Activated CD8-positive, alpha-beta T cell treated with anti-CD3 and anti-CD28 coated beads, Interleukin-2, amount 10 ng/mL, durations not matched to agents 7 days and 5 days (primary cell): ENCODE measurements at regions of chr6 and their contacts with region 1.

Region 1: DNA sequence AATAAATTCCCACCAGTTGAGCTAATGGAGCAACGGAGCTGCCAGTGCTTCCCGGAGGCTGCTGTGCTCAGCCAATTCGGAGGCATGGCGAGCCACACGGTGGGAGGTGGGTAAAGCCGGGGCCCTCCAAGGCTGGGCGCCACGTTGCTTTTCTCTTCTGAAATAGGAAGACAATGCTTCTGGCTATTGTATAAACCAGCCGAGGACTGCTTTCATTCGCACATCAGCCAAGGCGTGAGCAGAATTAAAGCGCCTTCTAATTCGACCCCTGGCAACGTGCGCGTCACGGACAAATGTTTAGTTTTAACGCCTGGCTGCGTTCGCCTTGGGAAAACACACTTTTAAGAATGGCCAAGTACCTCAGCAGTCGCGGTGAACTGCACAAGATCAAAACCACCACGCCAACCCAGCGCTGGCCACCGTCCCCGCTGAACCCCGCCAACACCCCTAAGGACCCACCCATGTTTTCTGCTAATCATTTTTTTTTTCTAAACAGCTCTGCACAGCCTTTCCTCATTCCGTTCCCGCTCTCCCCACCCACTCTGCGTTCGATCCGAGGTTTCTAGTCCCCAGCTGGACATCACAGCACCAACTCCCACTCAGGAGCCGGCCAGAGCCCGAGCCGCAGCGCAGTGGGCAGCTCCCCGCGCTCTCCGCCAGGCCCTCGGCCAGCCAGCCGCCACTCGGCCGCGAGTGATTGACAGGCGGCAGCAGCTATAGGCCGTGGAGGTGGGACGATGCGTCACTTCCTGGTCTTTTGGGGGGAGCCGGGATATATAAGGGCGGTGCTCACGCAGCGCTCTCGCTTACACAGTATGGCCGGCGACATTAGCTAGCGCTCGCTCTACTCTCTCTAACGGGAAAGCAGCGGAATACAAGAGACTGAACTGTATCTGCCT is at the start of gene AMD1:
- DNase-seq: peak; percentile 97
- ATAC-seq: peak; percentile 74
- H3K4me3 Mint-ChIP-seq: peak within 1 kb of the TSS; percentile 95
- H3K27ac Mint-ChIP-seq: peak within 1 kb of the TSS; percentile 98
- H3K4me1 Mint-ChIP-seq: peaks cover 25% of the 10 kb centered on the region
- H3K27me3 Mint-ChIP-seq: no peaks in the 10 kb centered on the region
- total RNA-seq, gene AMD1: 75.5 to 77.7 TPM

Region 2: DNA sequence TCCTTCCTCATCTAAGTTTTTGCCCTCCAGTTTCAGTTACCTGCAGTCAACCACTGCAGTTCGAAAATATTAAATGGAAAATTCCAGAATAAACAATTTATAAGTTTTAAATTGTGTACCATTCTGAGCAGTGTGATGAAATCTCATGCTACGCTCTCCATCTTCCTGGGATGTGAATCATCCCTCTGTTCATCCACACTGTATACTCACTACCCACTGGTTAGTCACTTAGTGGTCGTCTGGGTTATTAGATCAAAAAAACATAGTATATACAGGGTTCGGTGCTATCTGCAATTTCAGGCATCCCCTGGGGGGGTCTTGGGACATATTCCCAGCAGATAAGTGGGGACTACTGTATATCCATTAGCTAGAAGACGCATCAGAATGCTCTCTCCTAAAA is 245.9 kb before region 1 on chr6:
- CTCF ChIA-PET with region 1: no interaction called
- POLR2A ChIA-PET with region 1: no interaction called
- DNase-seq: no peak
- ATAC-seq: no peak
- H3K4me3 Mint-ChIP-seq: no peak overlapping the region
- H3K27ac Mint-ChIP-seq: no peak overlapping the region
- H3K4me1 Mint-ChIP-seq: no peaks in the 10 kb centered on the region
- H3K27me3 Mint-ChIP-seq: no peaks in the 10 kb centered on the region

Region 3: DNA sequence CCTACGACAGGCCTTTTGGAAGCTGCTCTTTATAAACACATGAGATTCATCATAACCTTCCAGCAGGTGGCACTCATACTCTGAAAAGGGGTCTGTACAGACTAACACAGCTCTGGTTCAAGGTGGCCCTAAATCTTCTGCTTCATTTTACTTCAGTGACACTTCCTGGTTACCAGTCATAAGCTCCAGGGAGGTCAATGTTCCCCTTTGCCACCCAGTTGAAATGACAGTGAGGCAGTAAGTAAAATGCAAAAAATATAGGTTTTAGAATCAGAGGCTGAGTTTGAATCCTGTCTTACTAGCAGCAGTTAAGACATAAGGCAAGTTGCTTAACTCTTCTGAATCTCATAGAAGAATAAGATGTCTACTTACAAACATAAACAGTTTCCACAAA is 191.8 kb before region 1 on chr6:
- CTCF ChIA-PET with region 1: interaction called, 90 read pairs
- POLR2A ChIA-PET with region 1: interaction called, 20 read pairs
- DNase-seq: peak; percentile 86
- ATAC-seq: peak; percentile 99
- H3K4me3 Mint-ChIP-seq: no peak overlapping the region
- H3K27ac Mint-ChIP-seq: peak overlapping the region; percentile 65
- H3K4me1 Mint-ChIP-seq: peaks cover 15% of the 10 kb centered on the region
- H3K27me3 Mint-ChIP-seq: no peaks in the 10 kb centered on the region

Region 4: GRCh38 chr6:110815217-110816109 is 58.8 kb before region 1 on chr6 and contains the start of gene CDK19:
- CTCF ChIA-PET with region 1: interaction called, 82 read pairs
- POLR2A ChIA-PET with region 1: interaction called, 441 read pairs
- DNase-seq: peak; percentile 99
- ATAC-seq: peak; percentile 84
- H3K4me3 Mint-ChIP-seq: peak within 1 kb of the TSS; percentile 98
- H3K27ac Mint-ChIP-seq: peak within 1 kb of the TSS; percentile 98
- H3K4me1 Mint-ChIP-seq: peaks cover 37% of the 10 kb centered on the region
- H3K27me3 Mint-ChIP-seq: no peaks in the 10 kb centered on the region
- total RNA-seq, gene CDK19: 21.6 to 26.2 TPM

Region 5: GRCh38 chr6:110944681-110945151 is 70.5 kb after region 1 on chr6:
- CTCF ChIA-PET with region 1: interaction called, 13 read pairs
- POLR2A ChIA-PET with region 1: interaction called, 18 read pairs
- DNase-seq: peak; percentile 52
- ATAC-seq: peak; percentile 96
- H3K4me3 Mint-ChIP-seq: no peak overlapping the region
- H3K27ac Mint-ChIP-seq: peak overlapping the region; percentile 66
- H3K4me1 Mint-ChIP-seq: peaks cover 6% of the 10 kb centered on the region
- H3K27me3 Mint-ChIP-seq: no peaks in the 10 kb centered on the region

Region 6: DNA sequence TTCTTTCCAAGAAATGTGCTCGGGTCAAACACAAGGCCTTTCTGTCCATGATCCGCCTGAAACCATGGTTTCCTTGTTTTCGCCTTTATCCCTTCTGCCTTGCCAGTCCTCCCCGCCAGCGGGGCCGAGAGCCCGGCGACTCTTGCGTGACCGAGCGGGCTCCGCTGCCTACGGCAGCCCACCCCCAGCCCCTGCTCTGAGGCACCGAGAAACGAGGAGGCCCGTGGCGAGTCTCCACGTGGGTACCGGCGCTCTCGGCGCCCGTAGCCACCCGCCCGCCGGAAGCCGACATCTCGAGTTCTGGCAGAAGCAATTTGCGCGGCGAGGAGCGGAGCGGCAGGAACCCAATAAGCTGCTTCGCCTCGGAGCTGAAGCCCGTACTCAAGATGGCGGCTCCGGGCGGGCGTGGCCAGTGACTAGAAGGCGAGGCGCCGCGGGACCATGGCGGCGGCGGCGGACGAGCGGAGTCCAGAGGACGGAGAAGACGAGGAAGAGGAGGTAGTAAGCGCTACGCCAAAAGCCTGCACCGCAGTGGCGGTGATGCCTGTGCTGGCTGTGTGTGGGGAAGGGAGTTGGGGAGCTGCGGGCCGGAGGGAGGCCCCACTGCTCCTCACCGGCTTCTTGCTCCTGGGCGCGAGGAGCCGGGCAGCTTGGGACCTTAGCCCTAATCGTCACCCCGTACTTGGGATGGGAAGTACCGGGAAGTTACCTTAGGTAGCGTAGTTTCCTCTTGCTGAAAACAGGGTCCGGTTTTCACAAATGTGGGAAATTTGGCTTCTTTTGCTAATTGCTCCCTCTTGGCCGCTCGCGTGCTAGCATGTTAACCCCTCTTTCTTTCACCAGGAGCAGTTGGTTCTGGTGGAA is 84.3 kb after region 1 on chr6 and contains the start of gene GTF3C6:
- CTCF ChIA-PET with region 1: interaction called, 6 read pairs
- POLR2A ChIA-PET with region 1: interaction called, 37 read pairs
- DNase-seq: peak; percentile 96
- ATAC-seq: peak; percentile 99
- H3K4me3 Mint-ChIP-seq: peak within 1 kb of the TSS; percentile 98
- H3K27ac Mint-ChIP-seq: peak within 1 kb of the TSS; percentile 100
- H3K4me1 Mint-ChIP-seq: peaks cover 18% of the 10 kb centered on the region
- H3K27me3 Mint-ChIP-seq: no peaks in the 10 kb centered on the region
- total RNA-seq, gene GTF3C6: 93.9 to 99.8 TPM